Activated naive CD8-positive, alpha-beta T cell treated with anti-CD3 and anti-CD28 coated beads, Interleukin-2, amount 10 ng/mL, durations not matched to agents 7 days and 5 days (primary cell): ENCODE measurements at regions of chr15 and their contacts with region 1.

Region 1: DNA sequence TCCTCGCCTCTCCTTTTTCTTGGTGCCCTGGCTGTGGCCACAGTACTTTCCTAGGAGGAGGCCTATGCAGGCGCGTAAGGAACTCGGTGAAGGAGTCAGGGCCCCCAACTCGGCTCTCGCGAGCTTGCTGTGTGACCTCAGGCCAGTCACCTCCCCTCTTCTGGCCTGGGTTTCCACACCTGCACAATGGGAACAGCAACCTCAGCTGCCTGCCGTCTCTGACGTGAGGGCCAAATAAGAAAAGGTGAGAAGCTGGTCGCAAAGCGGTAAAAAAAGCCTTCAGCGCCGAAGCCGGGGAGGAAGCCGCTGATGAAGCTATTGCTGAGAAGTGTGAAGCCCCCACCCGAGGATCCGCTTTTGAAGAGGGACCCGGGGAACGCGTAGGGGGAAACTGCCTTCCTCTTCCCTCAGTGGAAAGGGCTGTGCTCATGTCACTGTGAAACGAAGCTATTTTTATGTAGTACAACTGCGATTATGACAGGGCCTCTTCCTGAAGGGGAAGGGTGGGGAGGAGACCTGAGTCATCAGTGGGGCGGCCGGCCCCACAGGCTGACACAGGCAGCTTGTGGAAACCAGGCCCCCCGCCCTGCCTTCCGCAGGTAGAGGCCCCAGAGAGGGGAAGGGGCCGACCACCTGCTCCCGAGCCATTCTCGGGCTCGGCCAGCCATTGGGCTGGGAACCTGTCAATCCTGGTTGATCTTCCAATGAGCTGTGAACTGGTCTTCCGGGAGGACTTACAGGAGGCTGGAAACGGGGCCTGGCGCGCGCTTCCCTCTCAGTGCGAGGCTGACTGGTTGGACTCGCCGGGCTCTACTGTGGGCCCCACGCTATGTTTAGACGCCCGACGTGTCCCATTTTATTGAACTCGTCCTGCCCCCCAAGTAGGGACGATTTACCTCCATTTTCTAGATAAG is 18.0 kb upstream of the ANKDD1A start:
- DNase-seq: peak; percentile 96
- ATAC-seq: peak; percentile 80
- H3K4me3 Mint-ChIP-seq: peak overlapping the region; percentile 84
- H3K27ac Mint-ChIP-seq: peak overlapping the region; percentile 95
- H3K4me1 Mint-ChIP-seq: peaks cover 53% of the 10 kb centered on the region
- H3K27me3 Mint-ChIP-seq: no peaks in the 10 kb centered on the region

Region 2: DNA sequence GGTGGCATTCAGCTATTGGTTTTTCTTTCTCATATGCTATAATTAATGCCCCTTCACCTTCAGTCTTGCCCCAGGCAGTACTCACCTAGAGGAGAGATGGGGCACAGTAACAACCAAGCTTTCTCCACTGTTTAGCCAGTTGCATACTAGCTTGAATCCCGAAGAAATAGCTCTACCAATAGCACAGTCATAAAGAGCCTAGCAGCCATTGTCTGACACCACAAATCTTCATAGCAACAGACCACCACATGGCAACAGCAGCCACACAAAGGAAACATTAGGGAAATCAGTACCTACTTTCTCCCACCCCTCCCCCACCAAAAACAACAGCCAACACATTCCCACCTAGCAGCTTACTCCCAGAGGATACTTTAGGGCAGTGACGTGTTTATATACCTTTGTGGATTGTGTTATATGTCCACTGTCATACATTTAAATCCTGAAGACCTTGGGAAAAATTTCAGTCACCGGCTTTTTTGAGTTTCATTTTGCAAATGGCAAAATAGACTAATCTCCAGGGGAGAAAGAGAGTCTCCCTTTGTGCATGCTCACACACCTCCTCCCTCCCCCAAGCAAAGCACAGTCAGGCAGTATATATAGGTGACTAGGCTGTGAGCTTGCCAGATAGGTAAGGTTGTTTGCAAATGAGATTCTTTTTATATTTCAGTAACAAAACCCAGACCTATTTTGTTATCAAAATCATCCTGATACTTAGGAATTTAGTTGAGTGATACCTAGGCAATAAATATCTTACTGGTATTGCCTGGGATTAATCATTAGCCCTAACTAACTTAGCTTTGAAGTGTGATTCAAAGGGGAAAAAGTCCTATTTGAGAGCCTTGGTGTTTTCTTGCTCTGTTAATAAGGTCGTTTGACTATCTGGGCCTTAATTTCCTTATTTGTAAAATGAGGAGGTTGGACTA is 258.9 kb before region 1 on chr15:
- POLR2A ChIA-PET with region 1: interaction called, 10 read pairs
- DNase-seq: peak; percentile 55
- ATAC-seq: peak; percentile 61
- H3K4me3 Mint-ChIP-seq: peak overlapping the region; percentile 62
- H3K27ac Mint-ChIP-seq: peak overlapping the region; percentile 80
- H3K4me1 Mint-ChIP-seq: peaks cover 52% of the 10 kb centered on the region
- H3K27me3 Mint-ChIP-seq: no peaks in the 10 kb centered on the region

Region 3: GRCh38 chr15:64836023-64836536 is 57.7 kb before region 1 on chr15:
- POLR2A ChIA-PET with region 1: interaction called, 86 read pairs
- DNase-seq: no peak
- ATAC-seq: peak; percentile 7
- H3K4me3 Mint-ChIP-seq: peak overlapping the region; percentile 67
- H3K27ac Mint-ChIP-seq: peak overlapping the region; percentile 74
- H3K4me1 Mint-ChIP-seq: peaks cover 37% of the 10 kb centered on the region
- H3K27me3 Mint-ChIP-seq: no peaks in the 10 kb centered on the region

Region 4: DNA sequence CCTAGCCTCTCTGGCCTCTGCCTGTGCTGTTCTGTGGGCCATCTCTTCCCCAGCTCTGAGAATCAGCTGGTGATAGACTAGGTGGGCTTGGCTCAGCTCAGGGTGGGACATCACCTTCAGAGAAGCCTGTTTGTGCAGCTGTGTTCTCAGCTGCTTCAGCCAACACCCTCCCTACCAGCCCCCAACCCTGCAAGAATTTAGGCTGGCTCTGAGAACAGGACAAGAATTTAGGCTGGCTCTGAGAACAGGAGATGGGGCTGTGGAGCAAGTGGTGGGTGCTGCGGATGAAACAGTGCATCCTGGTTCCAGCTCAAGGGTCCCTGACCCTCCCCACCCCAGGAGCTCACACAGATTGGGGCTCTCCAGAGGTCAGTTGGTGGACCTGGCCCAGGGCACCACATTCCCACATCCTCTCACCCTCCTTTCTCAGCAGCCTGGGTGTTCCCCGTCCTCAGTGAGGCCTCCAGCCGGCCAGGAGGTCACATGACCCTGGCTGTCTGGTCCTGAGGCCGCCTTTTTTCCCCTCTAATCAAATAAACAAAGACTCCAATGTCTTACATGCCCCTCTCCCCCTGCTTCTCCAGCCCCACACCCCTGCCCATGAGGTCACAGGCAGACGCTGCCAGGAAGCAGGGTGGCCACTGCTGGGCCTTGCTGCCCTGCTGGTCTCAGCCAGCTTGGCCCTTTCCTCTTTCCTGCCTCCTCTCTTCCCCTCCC is 37.2 kb before region 1 on chr15:
- POLR2A ChIA-PET with region 1: interaction called, 11 read pairs
- DNase-seq: no peak
- ATAC-seq: no peak
- H3K4me3 Mint-ChIP-seq: peak overlapping the region; percentile 6
- H3K27ac Mint-ChIP-seq: peak overlapping the region; percentile 61
- H3K4me1 Mint-ChIP-seq: peaks cover 24% of the 10 kb centered on the region
- H3K27me3 Mint-ChIP-seq: no peaks in the 10 kb centered on the region

Region 5: GRCh38 chr15:64905119-64905831 is 11.5 kb after region 1 on chr15:
- POLR2A ChIA-PET with region 1: interaction called, 44 read pairs
- DNase-seq: peak; percentile 85
- ATAC-seq: peak; percentile 84
- H3K4me3 Mint-ChIP-seq: peak overlapping the region; percentile 73
- H3K27ac Mint-ChIP-seq: peak overlapping the region; percentile 2
- H3K4me1 Mint-ChIP-seq: peaks cover 30% of the 10 kb centered on the region
- H3K27me3 Mint-ChIP-seq: peaks cover 5% of the 10 kb centered on the region

Region 6: DNA sequence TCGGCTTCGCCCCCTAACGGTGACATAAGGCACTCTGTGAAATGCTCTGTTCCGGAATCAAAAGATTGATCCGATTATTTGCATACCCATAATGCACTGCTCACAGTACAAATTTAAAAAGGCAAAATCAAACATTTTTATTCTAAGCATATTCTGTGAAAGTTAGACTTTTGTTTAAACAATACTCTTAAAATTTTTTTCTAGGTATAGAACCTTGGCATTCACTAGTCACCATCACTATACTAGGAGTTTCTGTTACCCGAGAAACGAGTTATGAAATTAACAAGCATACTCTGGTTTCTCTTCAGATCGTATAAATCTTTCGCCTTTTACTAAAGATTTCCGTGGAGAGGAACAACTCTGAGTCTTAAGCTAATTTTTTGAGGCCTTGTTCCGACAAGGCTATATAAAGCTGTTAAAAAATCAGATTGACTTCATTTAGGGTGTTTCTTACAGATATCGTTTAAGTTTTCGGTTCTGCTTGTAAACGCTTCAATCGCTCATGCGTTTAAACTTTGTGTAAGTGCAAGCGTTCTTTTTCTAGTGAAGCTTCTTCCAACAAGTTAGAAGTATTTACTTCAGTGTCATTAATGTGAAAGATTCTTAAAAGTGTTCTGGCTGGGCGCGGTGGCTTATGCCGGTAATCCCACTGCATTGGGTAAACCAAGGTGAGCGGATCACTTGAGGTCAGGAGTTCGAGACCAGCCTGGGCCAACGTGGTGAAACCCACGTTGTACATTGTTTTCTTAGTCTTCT is 410.8 kb after region 1 on chr15 and contains the start of gene RNU5B-1:
- POLR2A ChIA-PET with region 1: interaction called, 11 read pairs
- DNase-seq: peak; percentile 76
- ATAC-seq: peak; percentile 75
- H3K4me3 Mint-ChIP-seq: peak within 1 kb of the TSS; percentile 90
- H3K27ac Mint-ChIP-seq: peak within 1 kb of the TSS; percentile 94
- H3K4me1 Mint-ChIP-seq: peaks cover 20% of the 10 kb centered on the region
- H3K27me3 Mint-ChIP-seq: peaks cover 1% of the 10 kb centered on the region
- total RNA-seq, gene RNU5B-1: 27.2 to 27.3 TPM